RWPE1 (cell line): ENCODE measurements at regions of chr9 and their contacts with region 1.

Region 1: GRCh38 chr9:35237311-35237710 is 75.5 kb downstream of the UNC13B start:
- DNase-seq: no peak
- H3K27ac ChIP-seq: no peak overlapping the region
- CTCF ChIP-seq: no peak

Region 2: GRCh38 chr9:34252670-34253459 is 984.4 kb before region 1 on chr9:
- CTCF ChIA-PET with region 1: no interaction called
- POLR2A ChIA-PET with region 1: no interaction called
- DNase-seq: peak; percentile 67
- H3K27ac ChIP-seq: peak overlapping the region; percentile 99
- CTCF ChIP-seq: peak; percentile 99

Region 3: DNA sequence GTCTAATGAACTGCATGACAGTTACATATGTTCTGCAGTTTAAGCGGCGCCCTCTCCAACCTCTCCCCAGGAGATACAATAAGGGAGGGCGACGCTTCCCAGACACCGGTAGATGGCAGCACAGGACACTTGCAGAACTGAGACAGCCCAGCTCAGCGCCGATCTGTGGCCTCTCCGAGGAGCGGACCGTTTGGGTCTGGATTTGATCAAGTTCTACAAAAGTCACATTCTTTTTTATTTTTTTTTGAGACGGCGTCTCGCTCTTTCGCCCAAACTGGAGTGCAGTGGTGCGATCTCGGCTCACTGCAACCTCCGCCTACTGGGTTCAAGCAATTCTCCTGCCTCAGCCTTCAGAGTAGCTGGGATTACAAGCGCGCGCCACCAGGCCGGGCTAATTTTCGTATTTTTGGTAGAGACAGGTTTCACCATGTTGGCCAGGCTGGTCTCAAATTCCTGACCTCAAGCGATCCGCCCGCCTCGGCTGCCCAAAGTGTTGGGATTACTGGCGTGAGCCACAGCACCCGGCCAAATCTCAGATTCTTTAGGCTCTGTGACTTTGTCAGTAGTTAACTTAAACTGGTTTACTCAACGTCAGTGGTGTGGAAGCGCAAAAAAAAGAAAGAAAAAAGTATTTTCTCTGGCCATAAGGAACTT is 120.3 kb before region 1 on chr9:
- CTCF ChIA-PET with region 1: no interaction called
- POLR2A ChIA-PET with region 1: no interaction called
- DNase-seq: peak; percentile 91
- H3K27ac ChIP-seq: peak overlapping the region; percentile 97
- CTCF ChIP-seq: peak; percentile 100

Region 4: DNA sequence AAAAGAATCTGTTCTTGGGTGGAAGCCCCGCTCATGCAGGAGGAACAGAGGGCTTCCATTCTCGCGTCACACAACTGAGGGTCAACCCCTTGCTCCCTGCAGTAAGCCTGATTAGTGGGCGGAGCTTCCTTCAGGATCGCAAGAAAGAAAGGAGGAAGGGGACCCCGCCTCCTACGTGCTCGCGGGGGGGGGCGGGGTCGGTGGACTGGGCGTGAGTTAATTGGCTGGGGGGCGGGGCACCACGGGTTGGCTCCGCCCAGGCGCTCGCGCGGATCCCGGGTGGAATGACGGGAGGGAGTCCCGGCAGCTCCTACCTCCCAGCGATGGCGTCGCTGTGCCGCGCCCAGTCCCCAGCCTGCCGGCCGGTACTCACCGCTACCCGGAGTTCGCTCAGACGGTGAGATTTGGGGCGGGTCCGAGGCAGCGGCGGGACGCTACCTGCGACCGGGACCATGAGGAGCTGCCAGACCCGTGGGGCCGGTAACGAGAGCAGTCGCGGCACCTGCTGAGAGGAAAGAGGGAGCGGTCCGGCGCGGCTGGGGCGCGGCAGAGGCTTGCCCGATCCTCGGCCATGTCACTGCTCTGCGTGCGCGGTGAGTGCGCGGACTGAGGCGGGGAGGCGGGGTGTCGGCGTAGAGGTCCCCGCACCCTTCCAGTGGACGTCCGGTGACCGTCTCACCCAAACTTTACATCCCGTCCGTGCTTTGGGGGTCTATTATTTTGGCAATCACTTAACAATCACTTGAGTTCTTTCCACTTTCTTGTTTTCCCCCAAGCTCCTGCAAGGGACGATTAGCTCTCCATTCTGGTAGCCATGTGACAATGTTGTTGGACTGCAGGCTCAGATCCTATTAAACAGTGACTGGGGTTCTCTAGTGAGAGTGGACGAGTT is 75.4 kb before region 1 on chr9 and contains the start of gene UNC13B:
- CTCF ChIA-PET with region 1: interaction called, 10 read pairs
- POLR2A ChIA-PET with region 1: no interaction called
- DNase-seq: peak; percentile 99
- H3K27ac ChIP-seq: peak within 1 kb of the TSS; percentile 79
- CTCF ChIP-seq: no peak

Region 5: DNA sequence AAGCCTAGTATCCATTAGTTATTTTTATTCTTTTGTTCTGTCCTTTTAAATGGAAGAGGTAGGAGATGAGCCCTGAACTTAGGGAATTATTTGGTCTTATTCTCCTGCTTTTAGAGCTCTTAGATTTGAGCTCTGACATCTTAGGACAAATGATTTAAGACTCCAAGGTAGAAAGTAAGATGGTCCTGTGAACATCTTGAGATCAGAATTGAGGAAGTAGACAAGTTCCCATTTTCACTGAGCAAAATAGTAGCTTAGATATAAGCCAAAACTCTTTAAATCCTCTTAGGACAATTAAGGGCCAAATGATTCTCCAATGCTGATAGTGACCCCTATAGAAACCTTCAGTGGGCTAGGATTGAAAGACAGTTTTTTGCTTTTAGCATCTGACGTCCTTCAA is 199.6 kb after region 1 on chr9:
- CTCF ChIA-PET with region 1: no interaction called
- POLR2A ChIA-PET with region 1: no interaction called
- DNase-seq: no peak
- H3K27ac ChIP-seq: no peak overlapping the region
- CTCF ChIP-seq: no peak